Astrocyte of the cerebellum (primary cell): ENCODE measurements at regions of chr15 and their contacts with region 1.

Region 1: DNA sequence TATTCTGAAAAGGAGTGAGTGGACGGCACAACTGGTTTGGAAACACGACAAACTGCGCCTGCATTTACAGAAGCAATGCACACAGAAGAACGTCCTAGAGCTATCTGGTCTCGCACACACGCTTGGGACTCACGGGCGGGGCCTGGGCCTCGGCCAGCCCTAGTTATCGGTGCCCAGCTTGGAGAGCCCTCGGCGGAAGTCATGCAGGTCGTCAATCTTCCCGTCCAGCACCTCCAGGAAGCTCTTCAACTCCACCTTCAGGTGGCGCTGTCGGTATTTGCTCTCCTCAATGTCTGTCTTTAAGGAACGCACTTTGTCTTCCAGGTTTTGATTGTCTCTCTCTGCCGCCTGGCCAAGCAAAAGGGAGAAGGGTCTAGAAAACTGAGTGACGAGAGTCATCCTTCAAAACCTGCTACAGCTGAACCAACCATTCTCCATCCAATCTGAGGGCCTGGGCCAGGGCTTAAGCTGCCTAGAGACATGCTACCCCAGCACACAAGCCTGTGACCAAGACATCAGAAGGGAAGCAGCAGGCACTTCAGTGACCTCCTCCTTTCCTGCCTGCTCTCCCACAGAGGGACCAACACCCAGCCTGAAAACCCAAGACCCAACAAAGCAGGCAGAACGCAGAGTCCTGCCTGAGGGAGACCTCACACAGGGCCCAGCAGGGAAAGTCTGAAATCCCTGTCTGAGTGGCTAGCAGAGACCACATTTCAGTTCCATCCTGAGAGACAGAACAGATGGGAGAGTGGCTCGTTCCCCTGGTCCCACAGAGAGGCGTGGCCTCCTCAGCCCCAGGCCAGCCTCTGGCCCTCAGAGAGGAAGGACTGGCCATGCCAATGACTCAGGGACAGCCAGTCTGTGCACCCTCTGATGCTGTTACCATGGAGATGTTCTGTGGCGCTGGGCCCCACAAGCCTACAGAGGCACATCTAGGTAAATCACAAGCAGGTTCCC is 40.4 kb downstream of the WHAMM start:
- DNase-seq: peak; percentile 62
- H3K4me3 ChIP-seq: no peak overlapping the region
- CTCF ChIP-seq: peak; percentile 76

Region 2: DNA sequence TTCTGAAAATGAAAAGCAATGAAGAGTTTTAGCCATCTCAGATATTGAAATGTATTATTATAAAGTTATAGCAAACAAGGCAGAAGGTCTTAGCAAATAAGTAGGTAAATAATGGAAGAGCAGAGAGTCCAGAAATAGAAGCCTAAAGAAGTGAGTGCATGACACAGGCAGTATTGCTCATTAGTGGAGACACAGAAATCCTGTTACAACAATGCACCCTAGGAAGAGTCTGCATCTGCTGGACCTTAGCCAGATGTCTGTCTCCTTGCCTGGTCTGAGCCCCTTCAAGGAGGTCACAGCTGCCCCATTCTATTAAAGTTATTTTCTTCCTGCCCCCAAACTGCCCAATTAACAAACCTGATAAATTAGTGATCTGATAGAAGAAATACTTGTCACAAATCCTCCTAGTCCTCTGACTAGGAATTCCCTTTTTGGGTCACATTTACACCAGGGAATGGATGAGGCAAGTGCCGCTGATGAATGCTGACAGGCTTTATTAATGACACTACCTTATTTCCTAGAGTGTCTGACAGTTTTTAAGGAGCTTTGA is 50.8 kb after region 1 on chr15:
- in situ Hi-C with region 1: no loop called
- DNase-seq: no peak
- H3K4me3 ChIP-seq: no peak overlapping the region
- CTCF ChIP-seq: no peak

Region 3: DNA sequence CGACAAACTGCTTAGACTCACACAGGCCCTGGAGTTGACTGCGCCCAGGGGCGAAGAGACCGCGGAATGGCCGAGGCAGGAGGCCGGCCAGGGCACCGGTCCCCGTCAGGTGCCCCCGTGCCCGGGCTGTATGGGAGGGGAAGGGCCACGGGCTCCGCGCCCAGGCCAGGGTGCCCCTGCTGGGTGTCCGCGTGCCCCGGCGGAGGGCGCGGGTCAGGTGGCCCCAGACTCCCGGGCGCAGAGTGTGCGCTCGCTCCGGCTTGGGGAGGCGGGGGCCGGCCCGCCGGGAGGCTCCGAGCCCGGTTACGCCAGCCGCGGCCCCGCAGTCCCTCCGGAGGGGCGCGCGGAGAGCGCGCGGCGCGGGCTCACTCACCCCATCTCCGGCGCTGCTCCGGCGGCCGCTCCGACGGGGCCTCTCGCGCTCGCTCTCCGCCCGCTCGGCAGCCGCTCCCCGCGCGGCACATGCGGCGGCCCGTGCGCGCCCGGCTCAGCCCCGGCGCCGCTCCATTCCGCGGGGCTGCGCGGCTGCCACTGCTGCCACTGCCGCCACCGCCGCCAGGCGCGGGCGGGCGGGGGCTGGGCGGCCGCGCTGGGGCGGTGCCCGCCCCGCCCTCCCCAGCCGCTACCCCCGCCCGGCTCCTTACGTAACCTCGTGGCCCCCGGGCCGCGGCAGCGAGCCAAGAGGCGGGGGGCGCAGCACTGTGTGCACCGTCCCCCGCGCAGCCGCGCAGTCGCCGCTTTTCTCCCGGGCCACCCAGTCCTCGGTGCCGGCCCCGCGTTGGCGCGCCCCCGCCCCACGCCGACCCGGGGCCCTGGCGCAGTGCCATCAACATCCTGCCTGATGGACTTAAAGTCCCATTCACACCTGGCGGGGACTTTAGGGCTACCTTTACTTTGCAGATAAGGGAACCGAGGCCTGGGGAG is 102.6 kb after region 1 on chr15 and contains the start of gene HOMER2:
- in situ Hi-C with region 1: loop called (anchors 5 kb)
- DNase-seq: no peak
- H3K4me3 ChIP-seq: peak within 1 kb of the TSS; percentile 45
- CTCF ChIP-seq: no peak

Region 4: DNA sequence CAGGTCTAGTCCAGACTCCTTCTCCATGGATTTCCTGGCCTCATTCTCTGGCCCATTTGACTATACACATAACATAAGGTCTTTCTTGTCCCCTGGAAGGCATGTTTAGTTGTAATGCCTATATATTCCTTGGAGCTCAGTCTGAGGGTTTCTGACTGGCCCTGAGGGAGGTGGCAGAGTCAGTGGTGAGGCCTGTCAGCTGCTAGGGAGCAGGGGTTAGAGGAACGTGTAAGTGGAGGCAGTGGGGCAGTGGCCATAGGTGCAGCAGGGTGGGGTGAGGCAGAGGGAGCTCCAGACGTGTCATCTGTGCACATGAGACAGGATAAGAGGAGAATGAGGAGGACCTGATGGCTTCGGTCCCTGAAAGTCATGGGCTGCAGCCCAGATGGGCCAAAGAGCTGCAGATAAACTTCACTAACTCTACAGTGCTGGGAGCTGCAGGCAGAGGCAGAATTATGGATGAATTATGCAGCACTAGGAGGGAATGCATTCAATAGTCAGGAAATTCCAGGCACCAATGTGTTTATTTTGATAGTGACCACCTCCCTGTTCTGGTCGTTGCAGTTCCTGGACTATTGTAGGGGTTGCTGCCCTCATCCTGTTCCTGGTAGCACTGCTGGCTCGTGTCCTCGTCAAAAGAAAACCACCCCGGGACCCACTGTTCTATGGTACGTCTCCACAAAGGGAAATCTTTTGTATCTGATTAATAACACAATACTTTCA is 262.6 kb after region 1 on chr15:
- in situ Hi-C with region 1: loop called (anchors 5 kb)
- DNase-seq: peak; percentile 90
- H3K4me3 ChIP-seq: no peak overlapping the region
- CTCF ChIP-seq: peak; percentile 26